ENCODE measurements at regions of chr19 and their contacts with region 1.

Region 1: DNA sequence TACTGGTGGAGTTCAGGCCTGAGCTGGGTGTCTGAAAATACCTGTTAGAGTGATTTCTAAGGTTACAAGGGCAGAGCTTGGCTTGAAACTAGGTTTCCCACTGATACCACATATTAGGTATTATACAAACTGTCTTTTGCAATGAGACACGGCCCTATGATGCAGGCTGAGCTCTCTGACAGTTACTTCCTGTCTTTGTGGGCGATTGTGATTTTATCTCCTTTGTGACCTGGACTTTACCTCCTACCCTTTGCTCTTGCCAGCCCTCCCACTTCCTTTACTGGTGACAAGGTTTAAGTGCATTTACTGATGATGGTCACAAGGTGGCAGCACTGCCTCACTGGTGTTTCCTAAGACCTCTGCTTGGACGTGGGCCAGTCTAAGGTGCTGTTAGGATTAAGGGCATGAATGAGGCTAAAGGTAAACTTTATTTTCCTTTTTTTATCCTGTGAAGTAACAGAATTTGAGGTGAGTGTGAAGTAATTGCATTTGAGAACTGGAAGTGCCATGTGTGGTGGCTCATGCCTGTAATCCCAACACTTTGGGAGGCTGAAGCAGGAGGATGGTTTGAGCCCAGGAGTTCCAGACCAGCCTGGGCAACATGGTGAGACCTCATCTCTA is 7.7 kb upstream of the CXCL17 start:
- DNase-seq: peak; percentile 86
- H3K4me3 Mint-ChIP-seq: no peak overlapping the region
- H3K27ac Mint-ChIP-seq: no peak overlapping the region
- H3K4me1 Mint-ChIP-seq: no peaks in the 10 kb centered on the region
- H3K27me3 Mint-ChIP-seq: peaks cover 2% of the 10 kb centered on the region

Region 2: DNA sequence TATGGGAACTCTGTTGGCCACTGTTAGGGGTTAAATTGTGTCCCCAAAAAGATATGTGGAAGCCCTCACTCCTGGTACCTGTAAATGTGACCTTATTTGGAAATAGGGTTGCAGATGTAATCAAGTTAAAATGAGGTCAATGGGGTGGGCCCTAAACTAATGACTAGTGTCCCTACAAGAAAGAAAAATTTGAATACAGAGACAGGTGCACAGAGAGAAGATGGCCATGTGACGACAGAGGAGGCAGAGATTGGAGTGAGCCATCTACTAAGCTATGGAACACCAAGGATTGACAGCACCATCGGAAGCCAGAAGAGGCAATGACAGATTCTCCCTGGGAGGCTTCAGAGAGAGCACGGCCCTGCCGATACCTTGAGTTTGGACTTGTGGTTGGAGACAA is 334.7 kb before region 1 on chr19:
- CTCF ChIA-PET with region 1: no interaction called
- POLR2A ChIA-PET with region 1: no interaction called
- intact Hi-C with region 1: no loop called
- DNase-seq: no peak
- H3K4me3 Mint-ChIP-seq: no peak overlapping the region
- H3K27ac Mint-ChIP-seq: peak overlapping the region; percentile 53
- H3K4me1 Mint-ChIP-seq: peaks cover 42% of the 10 kb centered on the region
- H3K27me3 Mint-ChIP-seq: no peaks in the 10 kb centered on the region

Region 3: GRCh38 chr19:42386974-42387707 is 63.3 kb before region 1 on chr19:
- CTCF ChIA-PET with region 1: no interaction called
- POLR2A ChIA-PET with region 1: no interaction called
- intact Hi-C with region 1: no loop called
- DNase-seq: peak; percentile 76
- H3K4me3 Mint-ChIP-seq: peak overlapping the region; percentile 58
- H3K27ac Mint-ChIP-seq: no peak overlapping the region
- H3K4me1 Mint-ChIP-seq: peaks cover 4% of the 10 kb centered on the region
- H3K27me3 Mint-ChIP-seq: peaks cover 29% of the 10 kb centered on the region

Region 4: DNA sequence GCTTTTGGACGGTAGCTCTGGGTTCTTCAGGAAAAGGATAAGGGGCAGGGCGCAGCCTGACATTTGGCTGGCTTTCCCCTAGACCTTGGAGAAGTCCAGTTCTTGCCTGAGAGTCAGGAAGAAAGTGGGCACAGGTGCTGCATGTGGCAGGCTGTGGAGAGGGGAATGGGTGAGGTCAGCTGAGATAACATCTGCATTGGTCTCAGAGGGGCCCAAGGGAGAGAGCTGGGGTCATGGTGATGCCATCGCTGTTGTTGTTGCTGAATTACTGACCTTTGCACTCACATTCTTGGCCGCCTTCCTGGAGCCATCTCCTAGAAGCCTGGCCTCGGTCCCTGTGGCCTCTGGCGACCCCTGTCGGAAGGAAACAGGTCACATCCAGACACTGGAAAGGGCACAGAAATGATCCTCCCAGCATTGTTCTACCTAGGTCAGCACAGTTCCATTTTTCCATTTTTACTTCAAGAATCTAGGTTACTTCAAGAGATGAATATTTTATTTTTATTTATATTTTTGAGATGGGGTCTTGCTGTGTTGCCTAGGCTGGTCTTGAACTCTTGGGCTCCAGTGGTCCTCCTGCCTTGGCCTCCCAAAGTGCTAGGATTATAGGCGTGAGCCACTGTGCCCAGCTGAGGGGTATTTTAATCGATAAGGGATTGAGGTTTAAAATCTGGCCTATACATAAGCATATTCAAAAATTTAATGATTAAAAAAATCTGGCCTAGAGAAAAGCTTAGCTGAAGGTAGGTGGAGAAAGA is 16.7 kb before region 1 on chr19:
- CTCF ChIA-PET with region 1: interaction called, 32 read pairs
- POLR2A ChIA-PET with region 1: no interaction called
- intact Hi-C with region 1: no loop called
- DNase-seq: peak; percentile 80
- H3K4me3 Mint-ChIP-seq: no peak overlapping the region
- H3K27ac Mint-ChIP-seq: peak overlapping the region; percentile 13
- H3K4me1 Mint-ChIP-seq: peaks cover 9% of the 10 kb centered on the region
- H3K27me3 Mint-ChIP-seq: no peaks in the 10 kb centered on the region

Region 5: GRCh38 chr19:42529248-42529764 is 78.9 kb after region 1 on chr19:
- CTCF ChIA-PET with region 1: interaction called, 204 read pairs
- POLR2A ChIA-PET with region 1: interaction called, 8 read pairs
- intact Hi-C with region 1: loop called (anchors 1 kb)
- DNase-seq: peak; percentile 82
- H3K4me3 Mint-ChIP-seq: peak overlapping the region; percentile 72
- H3K27ac Mint-ChIP-seq: peak overlapping the region; percentile 66
- H3K4me1 Mint-ChIP-seq: peaks cover 33% of the 10 kb centered on the region
- H3K27me3 Mint-ChIP-seq: no peaks in the 10 kb centered on the region

Region 6: GRCh38 chr19:42563352-42564210 is 113.2 kb after region 1 on chr19:
- CTCF ChIA-PET with region 1: interaction called, 12 read pairs
- POLR2A ChIA-PET with region 1: no interaction called
- intact Hi-C with region 1: loop called (anchors 1 kb)
- DNase-seq: peak; percentile 30
- H3K4me3 Mint-ChIP-seq: no peak overlapping the region
- H3K27ac Mint-ChIP-seq: no peak overlapping the region
- H3K4me1 Mint-ChIP-seq: peaks cover 2% of the 10 kb centered on the region
- H3K27me3 Mint-ChIP-seq: peaks cover 5% of the 10 kb centered on the region

Region 7: DNA sequence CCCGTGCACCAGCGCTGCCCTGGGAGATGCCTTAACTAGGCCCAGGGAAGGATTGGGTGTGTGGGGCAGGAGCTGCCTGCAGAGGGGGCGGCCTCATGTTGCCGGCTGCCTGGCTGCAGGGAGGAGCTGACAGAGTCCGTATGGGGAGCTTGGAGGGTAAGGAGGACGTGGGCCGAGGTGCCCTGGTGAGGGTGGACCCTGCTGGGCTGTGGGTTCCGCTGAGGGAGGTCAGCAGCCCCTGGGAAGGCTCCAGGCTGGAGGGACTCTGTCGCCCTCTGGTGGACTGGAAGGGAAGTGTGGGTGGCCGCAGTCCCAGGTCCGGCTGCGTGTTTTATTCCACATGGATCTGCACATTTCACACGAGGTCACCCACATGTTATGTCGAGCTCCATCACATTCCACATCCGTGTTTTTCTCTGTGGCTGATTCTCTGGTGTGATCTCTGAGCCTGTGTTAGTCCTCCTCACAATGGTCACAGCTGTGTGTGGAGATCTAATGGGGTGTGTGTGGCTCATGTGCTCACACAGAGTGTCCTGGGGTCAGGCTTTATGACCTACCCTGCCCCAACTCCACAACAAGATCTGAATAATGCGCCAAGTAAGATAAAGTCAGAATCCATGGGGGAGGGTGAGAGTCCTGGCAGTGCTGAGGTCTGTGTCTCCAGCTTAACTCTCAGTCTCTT is 146.1 kb after region 1 on chr19:
- CTCF ChIA-PET with region 1: interaction called, 10 read pairs
- POLR2A ChIA-PET with region 1: no interaction called
- intact Hi-C with region 1: loop called (anchors 1 kb)
- DNase-seq: peak; percentile 48
- H3K4me3 Mint-ChIP-seq: no peak overlapping the region
- H3K27ac Mint-ChIP-seq: no peak overlapping the region
- H3K4me1 Mint-ChIP-seq: no peaks in the 10 kb centered on the region
- H3K27me3 Mint-ChIP-seq: peaks cover 12% of the 10 kb centered on the region